ENCODE measurements at regions of chr1 and their contacts with region 1.

Region 1: DNA sequence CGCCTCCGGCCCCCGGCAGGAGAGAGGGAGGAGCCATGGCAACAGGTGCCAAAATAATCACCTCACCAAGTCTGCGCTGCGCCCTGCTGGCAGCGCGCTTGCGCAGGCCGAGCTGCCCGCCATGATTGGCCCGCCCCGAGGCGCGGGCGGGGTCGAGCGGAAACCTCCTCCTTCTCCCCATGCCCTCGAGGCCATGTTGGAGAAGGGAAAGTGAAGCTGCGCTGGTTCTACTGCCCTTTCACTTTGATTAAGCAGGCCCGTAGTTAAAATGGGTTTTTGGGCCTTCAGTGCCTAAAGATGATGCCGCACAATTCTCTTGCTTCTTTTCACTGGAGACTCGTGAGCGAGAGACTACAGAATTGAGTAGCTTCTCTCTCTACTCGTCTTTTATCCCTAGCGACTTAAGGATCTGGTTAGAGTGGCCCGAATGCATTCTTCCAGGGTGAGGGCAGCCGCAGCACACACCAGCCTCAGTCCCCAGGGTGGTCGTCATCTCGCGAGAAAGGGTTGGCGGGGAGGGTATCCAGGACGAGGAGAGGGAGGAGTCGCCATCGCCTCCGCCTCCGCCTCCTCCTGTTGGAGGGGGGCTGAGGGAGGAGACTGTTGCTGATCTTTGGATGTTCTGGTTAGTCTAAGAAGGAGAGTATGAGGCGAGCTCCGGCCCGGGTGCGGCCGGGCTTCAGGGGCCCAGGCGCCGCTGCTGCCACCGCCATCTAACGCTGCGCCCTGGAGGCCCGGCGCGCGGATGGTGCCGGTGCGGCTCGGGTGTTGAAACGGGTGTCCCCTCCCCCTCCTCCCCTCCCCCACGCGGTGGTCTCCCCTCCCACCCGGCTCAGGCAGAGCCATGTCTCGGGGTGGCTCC is at the start of gene DCAF6:
- DNase-seq: peak; percentile 97
- ATAC-seq: peak; percentile 83
- H3K4me3 ChIP-seq: peak within 1 kb of the TSS; percentile 90 to 97 (median 96)
- H3K27ac ChIP-seq: peak within 1 kb of the TSS; percentile 97
- H3K4me1 ChIP-seq: peaks cover 38% of the 10 kb centered on the region
- H3K27me3 ChIP-seq: peaks cover 0 to 5% of the 10 kb centered on the region in 2 experiments; a peak in 1 of 5 replicates
- CTCF ChIP-seq: no peak
- EP300 ChIP-seq: no peak
- POLR2A ChIP-seq: peak; percentile 89 to 90; a peak in 3 of 4 replicates
- RAD21 ChIP-seq: peak; percentile 18; the same call in 1 of the 2 replicates
- total RNA-seq, gene DCAF6: 24.7 and 26.9 TPM in 2 replicates

Region 2: DNA sequence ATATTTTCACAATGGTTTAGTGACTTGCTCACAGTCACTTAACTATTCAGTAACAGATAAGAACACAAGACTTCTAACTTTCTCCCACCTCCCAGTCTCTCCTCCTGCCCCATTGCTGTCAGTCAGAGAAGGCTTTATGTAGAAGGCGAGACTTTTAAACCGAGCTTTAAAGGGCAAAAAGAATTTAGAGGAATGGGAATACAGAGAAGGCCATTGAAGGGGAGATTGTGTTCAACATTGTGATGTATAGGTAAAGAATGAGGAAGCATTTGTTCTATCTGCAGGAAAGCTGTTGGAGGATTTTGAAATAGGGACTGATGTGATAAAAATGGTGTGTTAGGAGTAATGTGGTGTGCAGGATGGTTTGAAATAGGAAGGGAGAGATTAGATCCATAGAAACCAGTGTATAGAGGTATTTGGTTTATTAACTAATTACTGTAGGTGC is 708.3 kb before region 1 on chr1:
- CTCF ChIA-PET with region 1: no interaction called
- POLR2A ChIA-PET with region 1: no interaction called
- in situ Hi-C with region 1: no loop called
- intact Hi-C with region 1: loop called (anchors 5 kb)
- DNase-seq: peak; percentile 35
- ATAC-seq: no peak
- H3K4me3 ChIP-seq: no peak overlapping the region
- H3K27ac ChIP-seq: no peak overlapping the region
- H3K4me1 ChIP-seq: peaks cover 38% of the 10 kb centered on the region
- H3K27me3 ChIP-seq: no peaks in the 10 kb centered on the region
- CTCF ChIP-seq: no peak
- EP300 ChIP-seq: no peak
- POLR2A ChIP-seq: no peak
- RAD21 ChIP-seq: no peak

Region 3: DNA sequence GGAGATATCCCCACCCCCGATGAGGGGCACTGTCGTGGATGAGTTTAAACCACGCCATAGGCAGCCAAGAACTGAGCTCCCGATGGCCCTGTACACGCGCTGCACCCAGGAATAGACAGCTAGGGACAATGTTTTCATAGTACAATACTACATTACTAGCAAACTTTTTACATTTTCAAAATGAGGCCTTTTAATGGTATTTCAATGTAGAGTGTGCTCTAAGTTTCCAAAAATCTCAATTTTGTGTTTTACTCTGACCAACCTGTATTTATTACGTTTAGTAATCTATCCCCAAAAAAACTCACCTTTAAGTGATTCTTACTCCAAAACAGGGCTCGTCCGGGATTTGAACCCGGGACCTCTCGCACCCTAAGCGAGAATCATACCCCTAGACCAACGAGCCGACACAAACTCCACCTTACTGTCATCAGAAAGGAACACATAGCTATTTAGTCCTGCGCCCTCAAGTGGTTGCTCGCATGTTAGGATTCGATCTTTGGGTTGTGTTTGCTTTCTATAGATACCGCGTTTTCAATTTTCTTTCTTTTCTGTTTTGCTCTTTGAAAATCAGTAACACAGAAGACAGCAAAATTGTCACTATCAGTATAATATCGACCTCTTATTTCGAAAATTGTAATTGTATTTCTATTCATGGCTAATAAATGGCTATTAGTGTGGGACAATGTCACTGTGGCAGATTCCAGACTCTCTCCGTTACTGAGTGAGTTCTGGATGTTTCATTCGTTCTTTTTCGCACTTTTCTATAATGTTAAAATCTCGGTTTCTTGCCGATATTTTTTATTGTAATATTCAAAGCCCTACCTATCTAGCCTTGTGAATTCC is 220.9 kb before region 1 on chr1:
- CTCF ChIA-PET with region 1: no interaction called
- POLR2A ChIA-PET with region 1: interaction called, 6 read pairs
- in situ Hi-C with region 1: loop called (anchors 10 kb)
- intact Hi-C with region 1: loop called (anchors 5 kb)
- DNase-seq: peak; percentile 84
- ATAC-seq: peak; percentile 37
- H3K4me3 ChIP-seq: peak overlapping the region; percentile 95 to 100 (median 96)
- H3K27ac ChIP-seq: peak overlapping the region; percentile 83
- H3K4me1 ChIP-seq: peaks cover 54% of the 10 kb centered on the region
- H3K27me3 ChIP-seq: peaks cover 0 to 6% of the 10 kb centered on the region in 2 experiments; a peak in 2 of 5 replicates
- CTCF ChIP-seq: peak; percentile 91
- EP300 ChIP-seq: 0 out of 4 replicates have a peak, but pooled peaks of 1 of the 2 experiments have one; percentile 23
- POLR2A ChIP-seq: no peak
- RAD21 ChIP-seq: no peak

Region 4: GRCh38 chr1:167721617-167722151 is 214.6 kb before region 1 on chr1 and contains the start of gene MPZL1:
- CTCF ChIA-PET with region 1: no interaction called
- POLR2A ChIA-PET with region 1: interaction called, 6 read pairs
- in situ Hi-C with region 1: loop called (anchors 10 kb)
- intact Hi-C with region 1: loop called (anchors 5 kb)
- DNase-seq: peak; percentile 85
- ATAC-seq: peak; percentile 98
- H3K4me3 ChIP-seq: peak within 1 kb of the TSS; percentile 92 to 95 (median 92)
- H3K27ac ChIP-seq: peak within 1 kb of the TSS; percentile 76
- H3K4me1 ChIP-seq: peaks cover 76% of the 10 kb centered on the region
- H3K27me3 ChIP-seq: no peaks in the 10 kb centered on the region
- CTCF ChIP-seq: no peak
- EP300 ChIP-seq: no peak
- POLR2A ChIP-seq: peak; percentile 47 to 73; a peak in 3 of 4 replicates
- RAD21 ChIP-seq: no peak; the same call in 1 of the 2 replicates
- total RNA-seq, gene MPZL1: 43.9 and 68.7 TPM in 2 replicates

Region 5: GRCh38 chr1:167803358-167804207 is 132.7 kb before region 1 on chr1:
- CTCF ChIA-PET with region 1: no interaction called
- POLR2A ChIA-PET with region 1: no interaction called
- in situ Hi-C with region 1: no loop called
- intact Hi-C with region 1: loop called (anchors 10 kb)
- DNase-seq: peak; percentile 90
- ATAC-seq: peak; percentile 94
- H3K4me3 ChIP-seq: peak overlapping the region in 1 of 3 experiments; percentile 21; a peak in 1 of 6 replicates
- H3K27ac ChIP-seq: no peak overlapping the region
- H3K4me1 ChIP-seq: peaks cover 29% of the 10 kb centered on the region
- H3K27me3 ChIP-seq: no peaks in the 10 kb centered on the region
- CTCF ChIP-seq: peak; percentile 96
- EP300 ChIP-seq: no peak
- POLR2A ChIP-seq: no peak
- RAD21 ChIP-seq: peak; percentile 88

Region 6: GRCh38 chr1:167913863-167914502 is 22.3 kb before region 1 on chr1 and contains the start of gene ADCY10:
- CTCF ChIA-PET with region 1: no interaction called
- POLR2A ChIA-PET with region 1: interaction called, 59 read pairs
- in situ Hi-C with region 1: no loop called
- intact Hi-C with region 1: no loop called
- DNase-seq: peak; percentile 44
- ATAC-seq: peak; percentile 48
- H3K4me3 ChIP-seq: 0 out of 6 replicates have a peak within 1 kb of the TSS, but pooled peaks of 1 of the 3 experiments have one; percentile 5
- H3K27ac ChIP-seq: peak within 1 kb of the TSS; percentile 36
- H3K4me1 ChIP-seq: peaks cover 54% of the 10 kb centered on the region
- H3K27me3 ChIP-seq: no peaks in the 10 kb centered on the region
- CTCF ChIP-seq: no peak
- EP300 ChIP-seq: peak in 1 of 2 experiments; percentile 70; a peak in 1 of 4 replicates
- POLR2A ChIP-seq: peak in 1 of 2 experiments; percentile 37; a peak in 1 of 4 replicates
- RAD21 ChIP-seq: no peak
- total RNA-seq, gene ADCY10: 0.02 and 0.03 TPM in 2 replicates

Region 7: GRCh38 chr1:167966050-167966449 is 29.8 kb after region 1 on chr1:
- CTCF ChIA-PET with region 1: no interaction called
- POLR2A ChIA-PET with region 1: interaction called, 10 read pairs
- in situ Hi-C with region 1: no loop called
- intact Hi-C with region 1: no loop called
- DNase-seq: no peak
- ATAC-seq: no peak
- H3K4me3 ChIP-seq: no peak overlapping the region
- H3K27ac ChIP-seq: no peak overlapping the region
- H3K4me1 ChIP-seq: peaks cover 8% of the 10 kb centered on the region
- H3K27me3 ChIP-seq: no peaks in the 10 kb centered on the region
- CTCF ChIP-seq: no peak
- EP300 ChIP-seq: no peak
- POLR2A ChIP-seq: no peak
- RAD21 ChIP-seq: no peak

Region 8: DNA sequence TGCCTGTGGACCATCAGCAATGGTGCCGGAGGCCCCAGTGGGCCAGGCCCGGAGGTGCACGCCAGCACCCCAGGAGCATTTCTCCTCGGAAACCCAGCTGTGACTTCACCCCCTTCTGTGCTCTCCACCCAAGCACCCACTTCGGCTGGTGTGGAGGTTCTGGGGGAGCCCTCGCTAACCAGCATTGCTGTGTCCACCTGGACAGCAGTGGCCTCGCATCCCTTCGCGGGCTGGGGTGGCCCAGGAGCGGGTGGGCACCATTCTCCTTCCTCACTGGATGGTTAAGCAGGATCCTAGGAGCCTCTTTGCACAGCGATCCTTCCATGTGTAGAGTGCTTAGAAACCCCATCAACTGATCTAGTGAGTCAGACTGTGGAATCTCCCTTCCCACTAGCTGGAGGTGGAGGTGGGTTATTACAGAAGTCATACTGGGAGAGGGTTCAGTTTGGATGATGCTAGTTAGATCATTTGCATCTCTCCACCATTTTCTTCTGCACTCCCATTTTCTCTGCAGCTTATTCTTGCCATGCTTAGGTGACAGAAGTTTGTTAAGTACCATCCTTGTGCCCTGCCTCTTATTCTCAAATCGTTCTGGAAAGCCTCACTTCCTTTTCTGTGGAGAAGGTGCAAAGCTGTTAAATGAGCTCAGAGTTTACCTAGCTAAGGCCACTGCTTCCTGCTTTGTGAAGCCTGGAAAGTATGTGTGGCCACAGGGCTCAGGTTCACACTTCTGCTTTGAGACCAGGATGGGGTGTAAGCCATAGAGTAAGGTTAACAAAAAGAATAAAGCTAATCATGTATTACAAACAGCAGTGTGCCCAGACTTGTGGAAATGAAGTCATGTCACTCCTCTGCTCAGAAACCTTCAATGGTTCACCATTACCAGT is 376.7 kb after region 1 on chr1:
- CTCF ChIA-PET with region 1: no interaction called
- POLR2A ChIA-PET with region 1: no interaction called
- in situ Hi-C with region 1: no loop called
- intact Hi-C with region 1: no loop called
- DNase-seq: no peak
- ATAC-seq: no peak
- H3K4me3 ChIP-seq: no peak overlapping the region
- H3K27ac ChIP-seq: no peak overlapping the region
- H3K4me1 ChIP-seq: no peaks in the 10 kb centered on the region
- H3K27me3 ChIP-seq: no peaks in the 10 kb centered on the region
- CTCF ChIP-seq: no peak
- EP300 ChIP-seq: no peak
- POLR2A ChIP-seq: no peak
- RAD21 ChIP-seq: no peak